ENCODE measurements at regions of chr11 and their contacts with region 1.

Region 1: GRCh38 chr11:17598700-17599459 is 51.8 kb downstream of the OTOG start:
- DNase-seq: peak; percentile 59 to 62
- ATAC-seq: peak; percentile 85 to 96
- H3K4me3 ChIP-seq: no peak overlapping the region
- H3K27ac ChIP-seq: no peak overlapping the region
- H3K4me1 ChIP-seq: no peaks in the 10 kb centered on the region
- CTCF ChIP-seq: peak; percentile 86
- EP300 ChIP-seq: no peak
- POLR2A ChIP-seq: no peak
- RAD21 ChIP-seq: peak; percentile 88 to 94

Region 2: GRCh38 chr11:17519061-17519885 is 79.6 kb before region 1 on chr11:
- CTCF ChIA-PET with region 1: no interaction called
- POLR2A ChIA-PET with region 1: no interaction called
- DNase-seq: no peak
- ATAC-seq: no peak
- H3K4me3 ChIP-seq: no peak overlapping the region
- H3K27ac ChIP-seq: no peak overlapping the region
- H3K4me1 ChIP-seq: no peaks in the 10 kb centered on the region
- CTCF ChIP-seq: no peak
- EP300 ChIP-seq: no peak
- POLR2A ChIP-seq: no peak
- RAD21 ChIP-seq: no peak

Region 3: DNA sequence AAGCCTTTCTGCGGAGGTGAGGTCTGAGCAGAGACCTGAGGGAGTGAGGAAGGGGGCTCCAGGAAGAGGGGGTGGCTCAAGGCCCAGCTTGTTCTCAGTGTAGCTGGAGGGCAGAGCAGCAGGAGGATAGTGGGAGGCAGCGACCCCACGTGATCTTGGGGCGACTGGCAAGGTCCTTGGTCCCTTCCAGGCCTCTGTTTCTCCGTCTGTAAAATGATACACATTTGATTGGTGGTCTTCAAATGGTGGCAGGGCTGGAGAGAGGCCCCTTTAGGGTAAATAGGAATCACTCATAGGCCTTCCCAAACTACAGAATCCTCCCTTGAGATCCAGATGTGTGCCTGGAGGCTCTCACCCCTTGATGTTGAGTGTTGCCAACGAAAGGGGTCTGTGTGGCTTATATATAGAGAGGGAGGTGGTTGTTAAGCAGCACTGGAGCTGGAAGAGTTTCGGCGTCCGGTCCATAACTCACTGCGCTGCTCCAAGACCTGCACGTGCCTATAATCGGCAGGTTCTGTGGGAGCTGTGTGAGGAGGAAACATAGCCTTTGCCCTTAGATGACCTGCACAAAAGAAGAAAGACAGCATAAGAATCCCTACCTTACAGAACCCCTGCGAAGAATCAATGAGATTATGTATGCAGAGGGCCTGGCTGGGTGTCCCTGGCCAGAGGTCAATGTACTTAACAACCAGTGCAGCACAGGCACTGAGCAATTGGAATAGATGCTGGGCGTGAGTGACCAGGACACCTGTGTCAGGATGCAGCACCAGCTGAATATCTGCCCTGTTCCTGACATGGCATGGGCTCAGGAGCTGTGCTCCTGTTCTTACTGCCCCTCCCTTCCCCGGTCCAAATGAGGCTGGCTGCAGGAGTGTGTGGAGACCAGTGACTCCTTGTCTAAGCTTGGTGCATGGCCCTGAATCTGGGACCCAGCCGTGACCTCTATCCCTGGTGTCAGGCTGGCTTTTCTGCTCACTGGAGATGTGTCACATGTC is 23.2 kb before region 1 on chr11:
- CTCF ChIA-PET with region 1: interaction called, 10 read pairs
- POLR2A ChIA-PET with region 1: no interaction called
- DNase-seq: no peak
- ATAC-seq: no peak
- H3K4me3 ChIP-seq: no peak overlapping the region
- H3K27ac ChIP-seq: no peak overlapping the region
- H3K4me1 ChIP-seq: no peaks in the 10 kb centered on the region
- CTCF ChIP-seq: no peak
- EP300 ChIP-seq: no peak
- POLR2A ChIP-seq: no peak
- RAD21 ChIP-seq: no peak

Region 4: GRCh38 chr11:17581732-17582053 is 17.2 kb before region 1 on chr11:
- CTCF ChIA-PET with region 1: interaction called, 13 read pairs
- POLR2A ChIA-PET with region 1: no interaction called
- DNase-seq: no peak
- ATAC-seq: no peak
- H3K4me3 ChIP-seq: no peak overlapping the region
- H3K27ac ChIP-seq: no peak overlapping the region
- H3K4me1 ChIP-seq: no peaks in the 10 kb centered on the region
- CTCF ChIP-seq: no peak
- EP300 ChIP-seq: no peak
- POLR2A ChIP-seq: no peak
- RAD21 ChIP-seq: no peak

Region 5: GRCh38 chr11:17986007-17986710 is 387.3 kb after region 1 on chr11:
- CTCF ChIA-PET with region 1: interaction called, 10 read pairs
- POLR2A ChIA-PET with region 1: no interaction called
- DNase-seq: no peak
- ATAC-seq: 0 out of 6 replicates have a peak, but pooled peaks of 1 of the 2 experiments have one; percentile 50
- H3K4me3 ChIP-seq: no peak overlapping the region
- H3K27ac ChIP-seq: no peak overlapping the region
- H3K4me1 ChIP-seq: peaks cover 15% of the 10 kb centered on the region; the same call in 2 of the 3 replicates
- CTCF ChIP-seq: no peak
- EP300 ChIP-seq: no peak
- POLR2A ChIP-seq: no peak
- RAD21 ChIP-seq: no peak